HEK293 (cell line): ENCODE measurements at regions of chr16 and their contacts with region 1.

Region 1: DNA sequence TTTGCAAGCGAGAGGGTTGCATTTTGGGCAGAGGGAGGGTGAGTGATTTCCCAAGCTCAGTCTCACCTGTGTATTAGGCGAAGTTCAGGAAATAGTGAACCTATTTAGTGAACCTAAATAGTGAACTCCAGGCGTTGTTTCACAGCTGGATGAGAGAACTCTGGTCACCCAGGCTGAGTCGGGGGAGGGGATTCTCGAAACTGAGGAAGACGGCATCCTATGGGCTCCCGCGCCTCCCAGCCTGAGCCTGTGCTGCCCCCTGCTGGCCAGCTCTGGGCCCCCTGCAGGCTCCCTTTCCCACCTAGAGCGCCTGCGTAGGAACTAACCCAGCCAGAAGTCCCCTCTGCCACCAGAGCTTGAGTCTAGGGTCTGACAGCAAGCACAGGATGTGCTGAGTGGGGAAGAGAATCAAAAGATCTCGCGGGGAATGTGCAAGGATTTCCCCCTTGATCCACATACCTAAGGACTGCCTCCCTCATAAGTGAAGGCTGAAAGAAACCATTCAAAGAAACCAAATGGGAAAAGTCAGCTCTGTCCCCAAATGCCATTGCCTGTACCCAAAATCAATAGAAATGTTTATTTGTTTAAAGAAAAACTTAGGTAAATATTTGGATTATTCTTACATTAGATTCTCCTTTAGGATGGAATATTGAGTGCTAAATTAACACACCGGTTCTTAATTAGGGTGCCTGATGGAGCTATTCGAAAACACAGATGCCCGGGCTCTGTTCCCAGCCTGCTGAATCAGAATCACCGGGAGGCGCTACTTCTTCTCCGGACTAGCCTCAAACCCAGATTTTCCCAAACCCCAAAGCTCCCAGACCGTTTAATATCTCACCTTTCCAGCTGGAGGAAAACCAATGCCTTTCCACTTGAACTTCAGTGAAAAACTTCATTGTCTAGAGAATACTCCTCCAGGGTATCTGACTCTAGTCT is 14.8 kb upstream of the MARVELD3 start:
- H3K4me3 ChIP-seq: no peak overlapping the region
- H3K27ac ChIP-seq: no peak overlapping the region
- H3K4me1 ChIP-seq: no peaks in the 10 kb centered on the region
- CTCF ChIP-seq: peak; percentile 91

Region 2: DNA sequence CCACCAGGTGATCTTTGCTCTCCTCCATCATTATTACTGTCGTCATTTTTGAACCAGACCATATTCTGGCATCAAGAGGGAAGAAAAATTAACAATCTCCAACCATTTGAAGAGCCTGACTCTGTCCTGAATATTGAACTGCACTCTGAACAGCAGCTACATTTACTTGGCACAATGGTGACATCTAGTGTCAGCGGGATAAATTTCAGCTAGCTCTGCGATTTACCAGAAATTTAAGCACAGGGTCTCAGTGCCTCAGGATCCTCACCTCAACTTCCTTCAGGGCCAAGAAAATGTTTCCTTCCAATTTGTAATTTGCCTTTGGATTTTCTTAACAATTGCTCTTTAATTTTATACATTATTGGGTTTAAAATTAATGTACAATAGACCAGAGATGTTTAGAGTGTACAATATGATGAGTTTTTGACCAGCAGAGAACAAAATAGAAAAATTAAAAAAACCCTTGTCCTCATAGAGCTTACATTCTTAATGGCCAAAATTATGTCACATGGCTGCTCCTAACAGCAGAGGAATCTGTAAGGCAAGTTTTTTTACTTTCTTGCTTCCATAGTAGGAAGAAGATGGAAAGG is 111.3 kb before region 1 on chr16:
- CTCF ChIA-PET with region 1: interaction called, 35 read pairs
- POLR2A ChIA-PET with region 1: no interaction called
- H3K4me3 ChIP-seq: no peak overlapping the region
- H3K27ac ChIP-seq: no peak overlapping the region
- H3K4me1 ChIP-seq: no peaks in the 10 kb centered on the region
- CTCF ChIP-seq: no peak

Region 3: GRCh38 chr16:71552698-71553451 is 58.3 kb before region 1 on chr16:
- CTCF ChIA-PET with region 1: interaction called, 15 read pairs
- POLR2A ChIA-PET with region 1: no interaction called
- H3K4me3 ChIP-seq: no peak overlapping the region
- H3K27ac ChIP-seq: no peak overlapping the region
- H3K4me1 ChIP-seq: no peaks in the 10 kb centered on the region
- CTCF ChIP-seq: no peak

Region 4: GRCh38 chr16:71585318-71585703 is 25.9 kb before region 1 on chr16:
- CTCF ChIA-PET with region 1: interaction called, 11 read pairs
- POLR2A ChIA-PET with region 1: no interaction called
- H3K4me3 ChIP-seq: no peak overlapping the region
- H3K27ac ChIP-seq: no peak overlapping the region
- H3K4me1 ChIP-seq: no peaks in the 10 kb centered on the region
- CTCF ChIP-seq: no peak

Region 5: DNA sequence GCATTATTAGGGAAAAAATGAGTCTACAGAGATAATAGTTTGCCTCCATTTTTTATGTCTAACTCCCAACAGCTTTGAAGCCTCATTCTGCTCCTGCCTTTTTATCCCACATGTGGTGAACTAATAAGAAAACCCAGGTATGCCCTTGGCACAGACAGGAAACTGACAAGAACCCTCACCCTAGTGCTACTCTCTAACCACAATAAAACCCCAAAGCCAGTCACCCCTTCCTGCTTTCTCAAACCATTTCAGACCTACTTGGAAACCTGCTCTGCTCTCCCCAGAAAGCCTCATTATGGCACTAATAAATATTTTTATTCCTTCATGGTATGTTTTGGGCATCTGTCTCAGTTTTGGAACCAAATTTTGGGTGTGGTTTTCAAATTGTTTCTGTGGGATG is 10.9 kb after region 1 on chr16:
- CTCF ChIA-PET with region 1: interaction called, 26 read pairs
- POLR2A ChIA-PET with region 1: interaction called, 3 read pairs
- H3K4me3 ChIP-seq: no peak overlapping the region
- H3K27ac ChIP-seq: no peak overlapping the region
- H3K4me1 ChIP-seq: no peaks in the 10 kb centered on the region
- CTCF ChIP-seq: no peak